SK-N-SH (cell line): ENCODE measurements at regions of chr6 and their contacts with region 1.

Region 1: DNA sequence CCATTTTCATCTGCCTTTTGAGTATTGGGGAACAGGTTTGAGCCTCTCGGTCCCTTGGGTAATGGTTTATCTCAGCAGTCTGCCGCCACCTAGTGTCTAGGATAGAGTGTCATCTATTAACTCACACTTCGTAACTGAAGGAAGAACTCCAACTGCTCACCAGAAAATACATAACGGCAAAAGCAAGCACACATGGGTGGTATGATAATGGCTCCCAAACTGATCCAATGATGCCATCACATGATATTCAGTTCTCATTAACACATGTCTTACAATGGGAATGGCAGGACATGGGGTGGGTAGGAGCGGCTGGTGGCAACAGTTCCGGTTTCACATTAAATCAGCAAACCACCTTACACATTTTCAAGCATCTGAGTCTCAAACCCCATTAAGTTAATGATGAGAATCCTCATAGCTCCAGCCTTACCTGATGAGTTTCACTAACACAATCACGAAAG is 110.7 kb upstream of the PHACTR1 start:
- DNase-seq: peak; percentile 57
- H3K4me3 ChIP-seq: no peak overlapping the region
- H3K27ac ChIP-seq: no peak overlapping the region
- H3K4me1 ChIP-seq: peaks cover 2 to 12% of the 10 kb centered on the region in 2 experiments; a peak in 2 of 4 replicates
- H3K27me3 ChIP-seq: no peaks in the 10 kb centered on the region
- CTCF ChIP-seq: peak; percentile 81
- EP300 ChIP-seq: no peak
- RAD21 ChIP-seq: peak; percentile 87

Region 2: DNA sequence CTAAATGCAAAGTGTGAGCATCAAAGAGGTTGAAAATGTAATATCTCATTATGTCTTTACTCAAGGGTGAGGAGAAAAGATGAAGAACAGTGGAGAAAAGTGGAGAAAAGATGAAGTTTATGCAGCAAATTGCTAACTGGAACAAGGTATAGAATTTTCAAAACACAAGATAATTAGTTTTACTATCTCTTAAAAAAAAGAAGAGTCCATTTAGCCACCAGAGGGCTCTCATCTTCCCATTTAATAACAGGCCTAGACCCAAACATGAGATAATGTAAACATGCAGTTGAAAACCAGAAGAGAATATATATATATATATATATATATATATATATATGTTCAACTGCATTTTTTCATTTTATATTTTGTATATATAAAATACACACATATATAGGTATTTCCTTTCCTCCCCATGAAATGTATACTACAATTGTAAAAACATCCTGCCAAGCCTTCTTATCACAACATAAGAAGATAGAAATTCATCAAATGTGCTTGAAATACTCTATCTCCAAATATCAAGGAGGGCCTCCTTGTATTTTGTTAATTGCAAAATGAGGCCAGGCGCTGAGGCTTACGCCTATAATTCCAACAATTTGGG is 905.7 kb before region 1 on chr6:
- CTCF ChIA-PET with region 1: interaction called, 15 read pairs
- POLR2A ChIA-PET with region 1: no interaction called
- DNase-seq: peak; percentile 50
- H3K4me3 ChIP-seq: no peak overlapping the region; a peak in 1 of 4 replicates
- H3K27ac ChIP-seq: no peak overlapping the region
- H3K4me1 ChIP-seq: peaks cover 0 to 7% of the 10 kb centered on the region in 2 experiments; a peak in 1 of 4 replicates
- H3K27me3 ChIP-seq: no peaks in the 10 kb centered on the region
- CTCF ChIP-seq: peak; percentile 67
- EP300 ChIP-seq: no peak
- RAD21 ChIP-seq: peak; percentile 66

Region 3: DNA sequence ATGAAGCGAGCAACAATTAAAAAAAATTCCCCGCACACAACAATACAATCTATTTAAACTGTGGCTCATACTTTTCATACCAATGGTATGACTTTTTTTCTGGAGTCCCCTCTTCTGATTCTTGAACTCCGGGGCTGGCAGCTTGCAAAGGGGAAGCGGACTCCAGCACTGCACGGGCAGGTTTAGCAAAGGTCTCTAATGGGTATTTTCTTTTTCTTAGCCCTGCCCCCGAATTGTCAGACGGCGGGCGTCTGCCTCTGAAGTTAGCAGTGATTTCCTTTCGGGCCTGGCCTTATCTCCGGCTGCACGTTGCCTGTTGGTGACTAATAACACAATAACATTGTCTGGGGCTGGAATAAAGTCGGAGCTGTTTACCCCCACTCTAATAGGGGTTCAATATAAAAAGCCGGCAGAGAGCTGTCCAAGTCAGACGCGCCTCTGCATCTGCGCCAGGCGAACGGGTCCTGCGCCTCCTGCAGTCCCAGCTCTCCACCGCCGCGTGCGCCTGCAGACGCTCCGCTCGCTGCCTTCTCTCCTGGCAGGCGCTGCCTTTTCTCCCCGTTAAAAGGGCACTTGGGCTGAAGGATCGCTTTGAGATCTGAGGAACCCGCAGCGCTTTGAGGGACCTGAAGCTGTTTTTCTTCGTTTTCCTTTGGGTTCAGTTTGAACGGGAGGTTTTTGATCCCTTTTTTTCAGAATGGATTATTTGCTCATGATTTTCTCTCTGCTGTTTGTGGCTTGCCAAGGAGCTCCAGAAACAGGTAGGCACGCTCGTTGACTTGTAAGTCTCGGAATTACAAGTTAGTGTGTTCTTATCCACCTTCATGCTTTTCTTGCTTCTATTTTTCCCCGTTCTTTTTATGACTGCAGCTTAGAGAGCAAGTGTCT is 315.7 kb before region 1 on chr6 and contains the start of gene EDN1:
- CTCF ChIA-PET with region 1: interaction called, 91 read pairs
- POLR2A ChIA-PET with region 1: interaction called, 5 read pairs
- DNase-seq: peak; percentile 82
- H3K4me3 ChIP-seq: peak within 1 kb of the TSS; percentile 62 to 79
- H3K27ac ChIP-seq: peak within 1 kb of the TSS; percentile 50 to 79; a peak in 3 of 4 replicates
- H3K4me1 ChIP-seq: peaks cover 2 to 4% of the 10 kb centered on the region in 2 experiments; a peak in 3 of 4 replicates
- H3K27me3 ChIP-seq: no peaks in the 10 kb centered on the region
- CTCF ChIP-seq: peak; percentile 46
- EP300 ChIP-seq: 0 out of 4 replicates have a peak, but pooled peaks of 1 of the 2 experiments have one; percentile 19
- RAD21 ChIP-seq: peak; percentile 33; the same call in 1 of the 2 replicates
- polyA plus RNA-seq, gene EDN1: 1.3 TPM in 2 replicates

Region 4: GRCh38 chr6:12595161-12595811 is 10.6 kb before region 1 on chr6:
- CTCF ChIA-PET with region 1: interaction called, 14 read pairs
- POLR2A ChIA-PET with region 1: no interaction called
- DNase-seq: no peak
- H3K4me3 ChIP-seq: no peak overlapping the region
- H3K27ac ChIP-seq: no peak overlapping the region
- H3K4me1 ChIP-seq: peaks cover 3 to 12% of the 10 kb centered on the region in 2 experiments; a peak in 3 of 4 replicates
- H3K27me3 ChIP-seq: no peaks in the 10 kb centered on the region
- CTCF ChIP-seq: no peak
- EP300 ChIP-seq: no peak
- RAD21 ChIP-seq: no peak

Region 5: GRCh38 chr6:12666886-12667285 is 61.0 kb after region 1 on chr6:
- CTCF ChIA-PET with region 1: no interaction called
- POLR2A ChIA-PET with region 1: no interaction called
- DNase-seq: no peak
- H3K4me3 ChIP-seq: no peak overlapping the region
- H3K27ac ChIP-seq: no peak overlapping the region
- H3K4me1 ChIP-seq: no peaks in the 10 kb centered on the region
- H3K27me3 ChIP-seq: no peaks in the 10 kb centered on the region
- CTCF ChIP-seq: no peak
- EP300 ChIP-seq: no peak
- RAD21 ChIP-seq: no peak

Region 6: DNA sequence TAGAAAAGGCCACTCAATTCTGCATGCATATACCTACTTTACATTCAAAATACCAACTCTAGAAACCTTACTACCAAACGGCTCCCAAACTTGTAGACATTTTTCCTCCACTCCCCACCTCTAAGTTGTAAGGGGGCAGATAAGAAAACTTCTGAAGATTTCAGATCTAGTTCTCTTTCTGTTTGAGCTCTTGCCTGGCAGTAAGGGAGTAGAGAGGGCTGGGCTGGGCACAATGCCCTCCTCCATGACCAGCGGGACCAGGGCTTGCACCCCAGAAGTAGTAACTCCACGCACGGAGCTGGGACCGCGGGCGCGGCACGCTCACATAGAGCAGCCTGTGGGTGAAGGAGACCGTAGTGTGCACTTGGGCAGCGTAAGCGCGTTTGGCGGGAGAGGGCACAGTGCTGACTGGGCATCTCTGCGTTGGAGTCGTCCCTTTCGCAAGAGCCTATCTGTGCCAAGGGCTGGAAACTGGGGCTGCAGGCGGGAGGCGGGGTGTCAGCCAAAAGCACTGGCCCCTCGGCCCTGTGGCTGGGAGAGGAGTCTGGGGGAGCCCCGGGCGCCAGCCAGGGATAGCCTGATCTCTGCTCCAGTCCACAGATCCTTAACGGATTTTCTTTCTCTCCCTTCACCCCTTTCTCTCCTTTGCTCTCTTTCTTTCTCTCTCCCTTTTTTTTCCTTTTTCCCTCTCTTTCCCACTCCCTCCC is 143.1 kb after region 1 on chr6:
- CTCF ChIA-PET with region 1: no interaction called
- POLR2A ChIA-PET with region 1: no interaction called
- DNase-seq: peak; percentile 87
- H3K4me3 ChIP-seq: peak overlapping the region in 1 of 2 experiments; percentile 47; a peak in 2 of 4 replicates
- H3K27ac ChIP-seq: peak overlapping the region in 1 of 2 experiments; percentile 82; a peak in 2 of 4 replicates
- H3K4me1 ChIP-seq: peaks cover 0 to 5% of the 10 kb centered on the region in 2 experiments; a peak in 1 of 4 replicates
- H3K27me3 ChIP-seq: no peaks in the 10 kb centered on the region
- CTCF ChIP-seq: no peak
- EP300 ChIP-seq: no peak
- RAD21 ChIP-seq: no peak